Heart left ventricle (tissue), 16 donors: ENCODE measurements at regions of chr9 and their contacts with region 1.

Region 1: GRCh38 chr9:115013998-115014397 is 83.6 kb upstream of the TNFSF8 start:
- DNase-seq: peak; percentile 57 to 75 (median 64)
- ATAC-seq: peak; percentile 65 to 80 (median 72)
- H3K4me3 ChIP-seq: no peak overlapping the region
- H3K27ac ChIP-seq: no peak overlapping the region
- H3K4me1 ChIP-seq: peaks cover 0 to 6% (median 0%) of the 10 kb centered on the region in 12 donors
- H3K27me3 ChIP-seq: peaks cover 0 to 21% (median 0%) of the 10 kb centered on the region in 9 donors
- CTCF ChIP-seq: peak; percentile 61 to 86 (median 76)
- POLR2A ChIP-seq: no peak

Region 2: GRCh38 chr9:113973851-113974413 is 1040.1 kb before region 1 on chr9:
- intact Hi-C with region 1: no loop called
- DNase-seq: no peak
- ATAC-seq: no peak
- H3K4me3 ChIP-seq: no peak overlapping the region
- H3K27ac ChIP-seq: no peak overlapping the region
- H3K4me1 ChIP-seq: peaks cover 0 to 11% (median 0%) of the 10 kb centered on the region in 12 donors
- H3K27me3 ChIP-seq: no peaks in the 10 kb centered on the region
- CTCF ChIP-seq: no peak
- POLR2A ChIP-seq: no peak

Region 3: DNA sequence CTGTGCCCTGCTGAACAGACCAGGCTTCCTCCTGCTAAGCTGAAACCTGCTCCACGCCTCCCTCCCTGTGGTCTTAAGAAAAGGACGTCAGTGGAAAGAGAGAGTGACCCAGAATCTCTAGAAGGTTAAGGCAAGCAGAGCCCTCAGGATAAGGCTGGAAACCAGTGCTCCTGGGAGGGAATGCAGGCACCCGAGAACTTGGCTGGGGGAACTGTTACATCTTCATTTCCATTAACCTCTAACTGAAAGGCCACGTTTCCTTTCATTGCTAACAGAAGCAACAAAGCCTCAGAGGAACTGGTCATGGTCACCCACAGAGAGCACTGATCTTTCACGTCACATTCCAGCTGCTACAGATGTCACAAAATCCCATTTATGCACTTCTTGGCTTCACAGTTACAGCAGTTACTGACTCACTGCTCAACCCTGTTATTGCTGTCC is 600.1 kb before region 1 on chr9:
- intact Hi-C with region 1: loop called in 6 of 10 experiments (anchors 5 kb)
- DNase-seq: no peak
- ATAC-seq: peak in 1 of 4 donors; percentile 43
- H3K4me3 ChIP-seq: no peak overlapping the region
- H3K27ac ChIP-seq: peak overlapping the region in 2 of 12 donors; percentile 33 to 51
- H3K4me1 ChIP-seq: peaks cover 0 to 12% (median 0%) of the 10 kb centered on the region in 12 donors
- H3K27me3 ChIP-seq: no peaks in the 10 kb centered on the region
- CTCF ChIP-seq: no peak
- POLR2A ChIP-seq: no peak

Region 4: GRCh38 chr9:114653556-114654159 is 360.3 kb before region 1 on chr9:
- intact Hi-C with region 1: loop called in 1 of 10 experiments (anchors 5 kb)
- DNase-seq: peak in 4 of 5 donors; percentile 46 to 67 (median 58)
- ATAC-seq: peak; percentile 47 to 80 (median 76)
- H3K4me3 ChIP-seq: no peak overlapping the region
- H3K27ac ChIP-seq: no peak overlapping the region
- H3K4me1 ChIP-seq: peaks cover 0 to 7% (median 0%) of the 10 kb centered on the region in 12 donors
- H3K27me3 ChIP-seq: no peaks in the 10 kb centered on the region
- CTCF ChIP-seq: peak; percentile 73 to 89 (median 86)
- POLR2A ChIP-seq: no peak

Region 5: GRCh38 chr9:114681594-114682332 is 332.2 kb before region 1 on chr9 and contains the start of gene TEX48:
- intact Hi-C with region 1: loop called in 3 of 10 experiments (anchors 5 kb)
- DNase-seq: peak in 2 of 5 donors; percentile 38 to 39
- ATAC-seq: peak in 3 of 4 donors; percentile 50 to 74 (median 55)
- H3K4me3 ChIP-seq: no peak within 1 kb of the TSS
- H3K27ac ChIP-seq: no peak within 1 kb of the TSS
- H3K4me1 ChIP-seq: no peaks in the 10 kb centered on the region
- H3K27me3 ChIP-seq: peaks cover 0 to 19% (median 0%) of the 10 kb centered on the region in 9 donors
- CTCF ChIP-seq: peak in 11 of 12 donors; percentile 31 to 53 (median 41)
- POLR2A ChIP-seq: no peak
- total RNA-seq, gene TEX48: not detected

Region 6: GRCh38 chr9:114718801-114719221 is 295.2 kb before region 1 on chr9:
- intact Hi-C with region 1: no loop called
- DNase-seq: no peak
- ATAC-seq: no peak
- H3K4me3 ChIP-seq: no peak overlapping the region
- H3K27ac ChIP-seq: no peak overlapping the region
- H3K4me1 ChIP-seq: no peaks in the 10 kb centered on the region
- H3K27me3 ChIP-seq: peaks cover 0 to 40% (median 5%) of the 10 kb centered on the region in 9 donors
- CTCF ChIP-seq: no peak
- POLR2A ChIP-seq: no peak

Region 7: DNA sequence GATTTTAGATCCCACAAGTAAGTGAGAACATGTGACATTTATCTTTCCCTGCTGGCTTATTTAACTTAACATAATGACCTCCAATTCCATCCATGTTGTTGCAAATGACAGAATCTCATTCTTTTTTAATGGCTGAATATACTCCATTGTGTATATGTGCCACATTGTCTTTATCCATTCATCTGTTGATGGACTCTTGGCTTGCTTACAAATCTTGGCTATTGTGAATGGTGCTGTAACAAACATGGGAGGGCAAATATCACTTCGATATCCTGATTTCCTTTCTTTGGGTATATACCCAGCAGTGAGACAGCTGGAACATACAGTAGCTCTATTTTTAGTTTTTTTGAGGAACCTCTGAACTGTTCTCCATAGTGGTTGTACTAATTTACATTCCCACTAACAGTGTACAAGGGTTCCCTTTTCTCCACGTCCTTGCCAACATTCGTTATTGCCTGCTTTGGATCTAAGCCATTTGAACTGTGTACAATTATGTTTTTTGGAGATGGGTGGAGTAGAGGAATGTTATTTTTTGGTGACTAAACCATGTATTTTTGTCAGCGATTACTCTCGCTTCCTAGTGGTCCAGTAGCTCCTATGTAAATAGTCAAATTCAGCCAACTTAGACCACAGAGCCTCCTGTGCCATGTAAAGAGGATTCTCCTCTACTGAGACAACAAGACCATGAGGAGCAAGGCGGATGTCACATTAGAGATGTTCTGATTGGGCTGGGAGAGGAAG is 268.7 kb before region 1 on chr9:
- intact Hi-C with region 1: loop called in 1 of 10 experiments (anchors 5 kb)
- DNase-seq: no peak
- ATAC-seq: no peak
- H3K4me3 ChIP-seq: no peak overlapping the region
- H3K27ac ChIP-seq: no peak overlapping the region
- H3K4me1 ChIP-seq: peaks cover 0 to 17% (median 0%) of the 10 kb centered on the region in 12 donors
- H3K27me3 ChIP-seq: no peaks in the 10 kb centered on the region
- CTCF ChIP-seq: no peak
- POLR2A ChIP-seq: no peak

Region 8: GRCh38 chr9:114929201-114929600 is 84.8 kb before region 1 on chr9:
- intact Hi-C with region 1: loop called in 1 of 10 experiments (anchors 10 kb)
- DNase-seq: no peak
- ATAC-seq: no peak
- H3K4me3 ChIP-seq: peak overlapping the region in 8 of 12 donors; percentile 5 to 65 (median 42)
- H3K27ac ChIP-seq: peak overlapping the region in 5 of 12 donors; percentile 40 to 92 (median 60)
- H3K4me1 ChIP-seq: peaks cover 0 to 25% (median 0%) of the 10 kb centered on the region in 12 donors
- H3K27me3 ChIP-seq: peaks cover 0 to 28% (median 0%) of the 10 kb centered on the region in 9 donors
- CTCF ChIP-seq: no peak
- POLR2A ChIP-seq: no peak

Region 9: GRCh38 chr9:115109486-115109885 is 95.5 kb after region 1 on chr9:
- intact Hi-C with region 1: no loop called
- DNase-seq: no peak
- ATAC-seq: peak in 1 of 4 donors; percentile 51
- H3K4me3 ChIP-seq: no peak overlapping the region
- H3K27ac ChIP-seq: peak overlapping the region in 1 of 12 donors; percentile 86
- H3K4me1 ChIP-seq: peaks cover 0 to 4% (median 0%) of the 10 kb centered on the region in 12 donors
- H3K27me3 ChIP-seq: peaks cover 0 to 9% (median 0%) of the 10 kb centered on the region in 9 donors
- CTCF ChIP-seq: no peak
- POLR2A ChIP-seq: no peak